ENCODE measurements at regions of chr5 and their contacts with region 1.

Region 1: DNA sequence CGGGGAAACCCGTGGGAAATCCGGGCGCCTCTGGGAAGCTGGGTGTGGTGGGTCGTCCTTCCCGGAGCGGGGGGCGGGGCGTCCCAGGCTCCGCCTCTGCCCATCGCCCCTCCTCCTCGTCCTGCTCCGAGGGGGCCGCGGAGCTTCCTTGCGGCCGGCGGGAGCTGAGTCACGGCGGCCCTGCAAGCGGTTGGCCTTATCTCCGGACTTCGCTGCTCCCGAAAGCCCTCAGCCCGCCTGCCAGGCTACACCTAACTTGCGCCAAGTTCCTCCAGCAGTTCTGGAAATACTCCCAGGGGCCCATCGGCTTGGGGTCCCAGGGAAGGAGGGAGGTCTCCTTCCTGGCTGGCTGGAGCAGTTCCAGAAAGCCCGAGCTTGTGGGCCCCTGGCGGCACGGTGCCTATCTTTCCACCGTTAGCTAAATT is 54.1 kb upstream of the CDKN2AIPNL start:
- DNase-seq: peak; percentile 36
- H3K4me3 ChIP-seq: peak overlapping the region; percentile 51
- CTCF ChIP-seq: no peak

Region 2: GRCh38 chr5:134436523-134437339 is 29.1 kb before region 1 on chr5:
- CTCF ChIA-PET with region 1: no interaction called
- POLR2A ChIA-PET with region 1: interaction called, 10 read pairs
- DNase-seq: peak; percentile 90
- H3K4me3 ChIP-seq: peak overlapping the region; percentile 25
- CTCF ChIP-seq: no peak

Region 3: DNA sequence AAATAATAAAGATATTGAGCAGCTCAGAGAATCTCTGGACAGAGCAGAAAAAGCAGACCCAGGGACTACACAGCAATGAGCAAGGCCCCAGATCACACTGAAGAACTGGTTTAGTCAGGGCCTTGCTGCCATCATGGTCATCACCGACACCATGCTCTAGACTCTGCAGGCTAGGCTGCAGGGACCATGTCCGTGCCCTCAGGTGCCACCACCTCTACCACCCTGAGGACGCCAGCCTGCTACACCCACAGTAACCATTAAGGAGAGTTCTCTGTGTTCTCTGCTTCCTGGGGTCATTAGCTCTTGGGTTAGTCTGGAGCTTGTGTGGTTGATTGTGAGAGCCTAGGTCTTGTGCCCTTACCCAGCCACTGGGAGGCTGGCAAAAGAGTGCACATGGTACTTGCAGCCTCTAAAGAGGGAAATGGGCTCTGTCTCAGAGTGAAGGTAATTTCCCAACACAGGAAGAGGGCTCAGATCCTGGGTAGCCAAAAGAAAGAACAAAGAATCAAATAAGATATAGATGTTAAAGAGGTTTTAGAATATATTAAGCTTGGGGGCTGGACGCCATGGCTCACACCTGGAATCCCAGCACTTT is 27.7 kb after region 1 on chr5:
- CTCF ChIA-PET with region 1: no interaction called
- POLR2A ChIA-PET with region 1: no interaction called
- DNase-seq: no peak
- H3K4me3 ChIP-seq: no peak overlapping the region
- CTCF ChIP-seq: no peak